OCI-LY7 (cell line): ENCODE measurements at regions of chr6 and their contacts with region 1.

Region 1: DNA sequence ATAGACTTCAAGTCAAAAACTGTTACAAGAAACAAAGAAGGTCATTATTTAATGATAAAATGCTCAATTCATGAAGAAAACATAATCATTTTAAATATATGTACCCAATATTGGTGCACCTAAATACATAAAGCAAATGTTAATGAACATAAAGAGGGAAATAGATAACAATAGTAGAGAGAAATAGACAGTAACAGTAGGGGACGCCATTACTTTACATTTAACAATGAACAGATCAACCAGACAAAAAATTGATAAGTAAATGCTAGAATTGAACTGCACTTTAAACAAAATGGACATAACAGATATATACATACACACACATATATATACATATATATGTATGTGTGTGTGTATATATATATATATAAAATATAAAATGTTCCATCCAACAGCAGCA is 37.4 kb downstream of the IL22RA2 start:
- DNase-seq: no peak
- H3K4me3 ChIP-seq: no peak overlapping the region
- H3K27ac ChIP-seq: no peak overlapping the region
- H3K4me1 ChIP-seq: no peaks in the 10 kb centered on the region
- CTCF ChIP-seq: peak; percentile 54

Region 2: GRCh38 chr6:137148306-137149034 is 12.4 kb after region 1 on chr6:
- CTCF ChIA-PET with region 1: no interaction called
- POLR2A ChIA-PET with region 1: interaction called, 13 read pairs
- intact Hi-C with region 1: no loop called
- DNase-seq: no peak
- H3K4me3 ChIP-seq: no peak overlapping the region
- H3K27ac ChIP-seq: no peak overlapping the region
- H3K4me1 ChIP-seq: peaks cover 19% of the 10 kb centered on the region
- CTCF ChIP-seq: no peak

Region 3: DNA sequence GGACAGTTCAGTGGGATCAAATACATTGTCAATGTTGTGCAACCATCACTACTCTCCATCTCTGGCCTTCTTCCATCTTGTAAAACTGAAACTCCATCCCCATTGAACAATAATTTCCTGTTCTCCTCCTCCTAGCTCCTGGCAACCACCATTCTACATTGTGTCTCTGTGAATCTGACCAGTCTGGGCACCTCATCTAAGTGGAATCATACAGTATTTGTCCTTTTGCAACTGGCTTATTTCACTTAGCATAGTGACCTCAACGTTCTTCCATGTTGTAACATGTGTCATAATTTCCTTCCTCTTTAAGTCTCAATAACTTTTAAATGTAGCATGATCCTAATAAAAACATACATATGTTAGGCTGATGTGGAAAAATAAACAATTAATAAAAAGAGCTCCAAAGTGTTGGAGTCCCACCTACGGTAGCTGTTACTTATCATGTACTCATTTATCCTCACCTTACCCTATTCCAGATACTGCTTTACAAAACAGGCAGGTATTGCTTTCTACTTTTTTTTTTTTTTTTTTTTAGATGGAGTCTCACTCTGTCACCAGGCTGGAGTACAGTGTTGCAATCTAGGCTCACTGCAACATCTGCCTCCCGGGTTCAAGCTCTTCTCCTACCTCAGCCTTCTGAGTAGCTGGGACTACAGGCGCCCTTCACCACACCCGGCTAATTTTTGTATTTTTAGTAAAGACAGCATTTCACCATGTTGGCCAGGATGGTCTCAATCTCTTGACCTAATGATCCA is 822.9 kb after region 1 on chr6:
- CTCF ChIA-PET with region 1: no interaction called
- POLR2A ChIA-PET with region 1: no interaction called
- intact Hi-C with region 1: no loop called
- DNase-seq: no peak
- H3K4me3 ChIP-seq: no peak overlapping the region
- H3K27ac ChIP-seq: no peak overlapping the region
- H3K4me1 ChIP-seq: peaks cover 24% of the 10 kb centered on the region
- CTCF ChIP-seq: no peak